ENCODE measurements at regions of chrX and their contacts with region 1.

Region 1: GRCh38 chrX:16212436-16212835 is 45.2 kb downstream of the MAGEB17 start:
- DNase-seq: peak; percentile 35
- H3K4me3 Mint-ChIP-seq: no peak overlapping the region
- H3K27ac Mint-ChIP-seq: no peak overlapping the region
- H3K4me1 Mint-ChIP-seq: peaks cover 15% of the 10 kb centered on the region
- H3K27me3 Mint-ChIP-seq: no peaks in the 10 kb centered on the region
- CTCF ChIP-seq: no peak

Region 2: DNA sequence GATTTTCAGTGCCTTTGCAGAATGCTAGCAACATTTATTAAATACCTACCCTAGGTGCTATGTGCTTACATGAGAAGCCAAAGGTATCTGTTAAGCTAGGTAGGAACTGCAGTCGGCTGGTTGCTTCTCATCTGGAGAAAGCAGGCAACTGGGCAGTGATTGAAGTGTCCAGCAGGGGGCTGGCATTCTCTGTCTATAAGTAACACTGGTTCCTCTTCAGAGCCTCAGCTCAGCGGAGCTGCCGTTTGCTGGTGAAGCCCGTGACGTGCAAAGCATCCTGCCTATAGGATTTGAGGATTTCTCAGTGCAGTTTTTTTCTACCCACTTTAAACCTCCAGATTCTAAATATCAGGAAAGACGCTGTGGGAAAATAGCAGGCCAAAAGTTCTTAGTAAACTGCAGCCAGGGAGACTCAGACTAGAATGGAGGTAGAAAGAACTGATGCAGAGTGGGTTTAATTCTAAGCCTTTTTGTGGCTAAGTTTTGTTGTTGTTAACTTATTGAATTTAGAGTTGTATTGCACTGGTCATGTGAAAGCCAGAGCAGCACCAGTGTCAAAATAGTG is 89.1 kb before region 1 on chrX and contains the start of gene GRPR:
- CTCF ChIA-PET with region 1: interaction called, 15 read pairs
- intact Hi-C with region 1: loop called (anchors 1 kb)
- DNase-seq: peak; percentile 79
- H3K4me3 Mint-ChIP-seq: no peak within 1 kb of the TSS
- H3K27ac Mint-ChIP-seq: peak within 1 kb of the TSS; percentile 56
- H3K4me1 Mint-ChIP-seq: peaks cover 28% of the 10 kb centered on the region
- H3K27me3 Mint-ChIP-seq: no peaks in the 10 kb centered on the region
- CTCF ChIP-seq: peak; percentile 43
- total RNA-seq, gene GRPR: 0.32 and 0.85 TPM in 2 replicates

Region 3: DNA sequence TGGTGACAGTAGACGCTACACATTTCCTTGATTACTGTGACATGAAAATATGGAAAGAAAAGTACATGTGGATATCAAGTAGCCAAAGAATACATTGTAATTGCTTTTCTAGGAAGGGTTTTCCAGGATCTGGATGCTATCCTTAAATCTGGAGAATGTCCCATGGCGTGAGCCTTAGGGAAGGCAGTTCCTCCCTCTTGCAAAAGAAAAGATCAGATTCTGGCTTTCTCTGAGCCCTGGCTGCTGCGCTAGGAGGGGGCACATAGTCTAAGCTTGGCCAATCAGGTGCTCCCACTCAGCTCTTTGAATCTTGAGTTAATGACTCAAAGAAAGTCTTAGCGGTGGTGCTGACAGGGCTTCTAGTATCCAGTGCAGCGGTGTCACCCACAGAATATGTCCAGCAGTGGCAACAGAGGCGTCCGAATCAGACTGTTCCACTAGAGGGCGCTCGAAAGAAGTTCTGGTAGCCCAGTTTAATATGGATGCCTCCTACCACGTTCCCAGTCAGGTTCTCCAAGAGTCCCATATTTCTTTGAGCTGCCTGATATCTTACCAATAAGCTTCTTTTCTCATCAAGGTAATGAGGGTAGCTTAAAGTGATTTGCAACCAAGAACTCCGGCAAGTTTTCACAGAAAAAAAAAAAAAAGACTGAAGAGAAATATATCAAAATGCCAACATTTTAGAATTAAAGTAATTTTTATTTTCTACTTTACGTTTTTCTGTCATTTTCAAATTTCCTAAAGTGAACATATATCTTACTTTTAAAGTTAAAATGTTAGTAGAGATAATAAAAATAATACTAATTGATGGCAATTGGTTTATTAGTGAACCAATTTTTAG is 224.1 kb after region 1 on chrX:
- CTCF ChIA-PET with region 1: no interaction called
- intact Hi-C with region 1: loop called (anchors 5 kb)
- DNase-seq: peak; percentile 80
- H3K4me3 Mint-ChIP-seq: no peak overlapping the region
- H3K27ac Mint-ChIP-seq: no peak overlapping the region
- H3K4me1 Mint-ChIP-seq: no peaks in the 10 kb centered on the region
- H3K27me3 Mint-ChIP-seq: no peaks in the 10 kb centered on the region
- CTCF ChIP-seq: peak; percentile 49